Caco-2 (cell line): ENCODE measurements at regions of chr1 and their contacts with region 1.

Region 1: GRCh38 chr1:13725714-13726175 is 25.8 kb downstream of the PRDM2 start:
- DNase-seq: peak; percentile 34 to 40
- H3K4me3 ChIP-seq: no peak overlapping the region
- H3K4me3 Mint-ChIP-seq: no peak overlapping the region
- H3K27ac Mint-ChIP-seq: no peak overlapping the region
- H3K4me1 ChIP-seq: no peaks in the 10 kb centered on the region
- H3K4me1 Mint-ChIP-seq: no peaks in the 10 kb centered on the region
- H3K27me3 ChIP-seq: no peaks in the 10 kb centered on the region
- H3K27me3 Mint-ChIP-seq: no peaks in the 10 kb centered on the region
- CTCF ChIP-seq: peak; percentile 26 to 31

Region 2: GRCh38 chr1:13570924-13571323 is 154.8 kb before region 1 on chr1:
- CTCF ChIA-PET with region 1: no interaction called
- POLR2A ChIA-PET with region 1: no interaction called
- intact Hi-C with region 1: no loop called
- DNase-seq: no peak
- H3K4me3 ChIP-seq: no peak overlapping the region
- H3K4me3 Mint-ChIP-seq: no peak overlapping the region
- H3K27ac Mint-ChIP-seq: no peak overlapping the region
- H3K4me1 ChIP-seq: no peaks in the 10 kb centered on the region
- H3K4me1 Mint-ChIP-seq: no peaks in the 10 kb centered on the region
- H3K27me3 ChIP-seq: no peaks in the 10 kb centered on the region
- H3K27me3 Mint-ChIP-seq: no peaks in the 10 kb centered on the region
- CTCF ChIP-seq: peak in 1 of 2 experiments; percentile 27

Region 3: GRCh38 chr1:13662493-13662892 is 63.3 kb before region 1 on chr1:
- CTCF ChIA-PET with region 1: no interaction called
- POLR2A ChIA-PET with region 1: no interaction called
- intact Hi-C with region 1: loop called (anchors 1 kb)
- DNase-seq: no peak
- H3K4me3 ChIP-seq: no peak overlapping the region
- H3K4me3 Mint-ChIP-seq: no peak overlapping the region
- H3K27ac Mint-ChIP-seq: no peak overlapping the region
- H3K4me1 ChIP-seq: no peaks in the 10 kb centered on the region
- H3K4me1 Mint-ChIP-seq: no peaks in the 10 kb centered on the region
- H3K27me3 ChIP-seq: no peaks in the 10 kb centered on the region
- H3K27me3 Mint-ChIP-seq: no peaks in the 10 kb centered on the region
- CTCF ChIP-seq: no peak

Region 4: DNA sequence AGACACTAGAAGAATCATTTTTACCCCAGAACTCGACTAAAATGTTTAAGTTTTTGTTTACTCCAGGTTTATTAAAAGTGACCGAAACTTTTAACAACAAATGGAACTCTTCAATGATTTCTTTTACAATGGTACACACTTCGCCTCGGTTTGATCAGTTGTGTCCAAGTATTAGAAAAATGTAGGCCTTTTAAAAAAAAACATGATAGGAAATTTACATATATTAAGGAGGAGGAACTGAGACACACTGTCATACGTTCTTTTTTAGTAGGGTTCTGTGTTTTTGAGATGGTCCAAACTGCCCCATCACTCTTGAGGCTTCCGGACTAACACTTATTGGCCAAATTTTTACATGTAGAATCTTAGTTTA is 24.5 kb before region 1 on chr1:
- CTCF ChIA-PET with region 1: no interaction called
- POLR2A ChIA-PET with region 1: no interaction called
- intact Hi-C with region 1: no loop called
- DNase-seq: no peak
- H3K4me3 ChIP-seq: no peak overlapping the region
- H3K4me3 Mint-ChIP-seq: peak overlapping the region; percentile 90
- H3K27ac Mint-ChIP-seq: no peak overlapping the region
- H3K4me1 ChIP-seq: 0 out of 2 replicates have a peak, but pooled peaks cover 6% of the 10 kb centered on the region
- H3K4me1 Mint-ChIP-seq: peaks cover 6% of the 10 kb centered on the region
- H3K27me3 ChIP-seq: no peaks in the 10 kb centered on the region
- H3K27me3 Mint-ChIP-seq: no peaks in the 10 kb centered on the region
- CTCF ChIP-seq: no peak

Region 5: DNA sequence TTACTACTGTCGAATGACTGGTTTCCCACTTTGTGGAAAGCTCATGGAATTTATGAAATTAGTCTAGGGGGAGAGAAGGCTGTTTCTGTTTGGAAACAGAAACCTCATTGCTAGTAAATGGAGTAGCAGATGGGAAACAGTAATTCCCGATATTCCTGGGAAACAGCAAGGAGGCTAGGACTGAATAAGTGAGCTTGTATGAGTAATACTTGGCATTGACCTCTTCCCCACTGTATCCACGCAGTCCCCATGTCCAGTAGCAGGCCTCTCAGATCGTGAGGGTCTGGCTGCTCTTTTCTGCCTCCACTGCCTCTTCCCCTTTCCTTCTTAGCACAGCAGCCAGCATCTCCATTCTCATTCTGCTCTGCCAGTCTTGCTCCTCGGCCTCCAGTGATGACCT is 49.7 kb after region 1 on chr1:
- CTCF ChIA-PET with region 1: no interaction called
- POLR2A ChIA-PET with region 1: no interaction called
- intact Hi-C with region 1: no loop called
- DNase-seq: no peak
- H3K4me3 ChIP-seq: no peak overlapping the region
- H3K4me3 Mint-ChIP-seq: no peak overlapping the region
- H3K27ac Mint-ChIP-seq: no peak overlapping the region
- H3K4me1 ChIP-seq: peaks cover 8% of the 10 kb centered on the region; the same call in 1 of the 2 replicates
- H3K4me1 Mint-ChIP-seq: peaks cover 6% of the 10 kb centered on the region
- H3K27me3 ChIP-seq: no peaks in the 10 kb centered on the region
- H3K27me3 Mint-ChIP-seq: no peaks in the 10 kb centered on the region
- CTCF ChIP-seq: no peak